Motor neuron (in vitro differentiated cells): ENCODE measurements at regions of chr21 and their contacts with region 1.

Region 1: GRCh38 chr21:32958288-32959002 is 67.3 kb upstream of the OLIG2 start:
- ATAC-seq: peak in 2 of 8 experiments; percentile 27 to 48
- H3K4me3 ChIP-seq: no peak overlapping the region
- H3K27ac ChIP-seq: no peak overlapping the region
- H3K4me1 ChIP-seq: peaks cover 59 to 67% of the 10 kb centered on the region in 2 donors

Region 2: GRCh38 chr21:32861866-32862265 is 96.6 kb before region 1 on chr21:
- in situ Hi-C with region 1: loop called in 1 of 9 experiments (anchors 25 kb)
- ATAC-seq: peak in 4 of 8 experiments; percentile 33 to 96 (median 92)
- H3K4me3 ChIP-seq: no peak overlapping the region
- H3K27ac ChIP-seq: no peak overlapping the region
- H3K4me1 ChIP-seq: no peaks in the 10 kb centered on the region

Region 3: DNA sequence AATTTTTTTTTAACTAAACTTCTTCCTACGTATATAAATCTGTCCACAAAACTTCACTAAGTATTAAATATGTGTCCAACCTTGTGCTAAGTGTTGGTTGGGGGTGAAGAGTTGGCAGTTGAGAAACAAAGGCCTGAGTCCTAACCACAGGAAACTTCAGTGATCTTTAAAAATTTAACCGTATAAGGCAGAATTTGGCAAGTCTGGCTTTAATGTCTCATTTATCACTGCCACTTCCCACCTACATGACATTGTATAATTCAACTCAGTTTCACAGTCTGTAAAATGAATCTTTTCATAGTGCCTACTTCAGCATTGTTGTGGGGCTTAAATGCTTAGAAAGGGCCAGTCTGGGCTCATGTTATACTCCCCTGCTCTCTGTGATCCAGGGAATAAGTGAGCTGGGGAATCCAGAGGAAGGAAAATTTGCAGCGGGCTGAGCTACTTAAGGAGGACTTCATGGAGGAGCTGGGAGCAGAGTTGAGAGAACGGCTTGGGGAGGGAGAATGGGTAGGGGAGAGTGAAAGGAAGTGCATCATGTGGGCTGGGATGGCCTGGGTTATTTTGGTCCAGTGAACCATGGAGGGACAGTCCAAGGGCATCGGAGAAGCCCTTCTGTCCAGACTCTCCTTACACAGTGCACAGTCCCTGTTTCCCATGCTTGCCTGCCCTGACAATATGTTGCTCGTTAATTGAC is 285.8 kb after region 1 on chr21:
- in situ Hi-C with region 1: no loop called
- ATAC-seq: no peak
- H3K4me3 ChIP-seq: no peak overlapping the region
- H3K27ac ChIP-seq: no peak overlapping the region
- H3K4me1 ChIP-seq: no peaks in the 10 kb centered on the region